Dendritic cell treated with granulocyte-macrophage colony-stimulating factor and Interleukin-4, amounts not matched to agents 40 ng/mL and 50 ng/mL, for 4 days (primary cell): ENCODE measurements at regions of chr1 and their contacts with region 1.

Region 1: DNA sequence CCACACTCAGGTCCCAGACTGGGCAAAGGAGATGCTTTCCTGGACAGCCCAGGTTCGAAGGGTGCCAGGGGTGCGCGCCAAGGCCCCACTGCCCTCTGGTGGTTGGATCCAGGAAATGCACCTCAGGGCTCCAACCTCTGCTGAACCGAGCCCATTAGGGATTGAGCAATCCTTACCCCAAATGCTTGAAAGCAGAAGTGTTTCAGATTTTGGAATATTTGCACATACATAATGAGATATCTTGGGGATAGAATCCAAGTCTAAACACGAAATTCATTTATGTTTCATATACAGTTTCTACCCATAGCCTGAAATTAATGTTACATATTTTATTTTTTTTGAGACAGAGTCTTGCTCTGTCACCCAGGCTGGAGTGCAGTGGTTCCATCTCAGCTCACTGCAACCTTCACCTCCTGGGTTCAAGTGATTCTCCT is 57.4 kb downstream of the SLC9A1 start:
- H3K4me3 Mint-ChIP-seq: no peak overlapping the region
- H3K27ac Mint-ChIP-seq: no peak overlapping the region
- H3K4me1 Mint-ChIP-seq: peaks cover 47% of the 10 kb centered on the region
- H3K27me3 Mint-ChIP-seq: peaks cover 2% of the 10 kb centered on the region

Region 2: GRCh38 chr1:25743149-25743825 is 1354.2 kb before region 1 on chr1:
- intact Hi-C with region 1: no loop called
- H3K4me3 Mint-ChIP-seq: no peak overlapping the region
- H3K27ac Mint-ChIP-seq: no peak overlapping the region
- H3K4me1 Mint-ChIP-seq: no peaks in the 10 kb centered on the region
- H3K27me3 Mint-ChIP-seq: no peaks in the 10 kb centered on the region

Region 3: GRCh38 chr1:26965213-26965612 is 132.3 kb before region 1 on chr1:
- intact Hi-C with region 1: loop called (anchors 5 kb)
- H3K4me3 Mint-ChIP-seq: no peak overlapping the region
- H3K27ac Mint-ChIP-seq: no peak overlapping the region
- H3K4me1 Mint-ChIP-seq: peaks cover 6% of the 10 kb centered on the region
- H3K27me3 Mint-ChIP-seq: peaks cover 56% of the 10 kb centered on the region

Region 4: DNA sequence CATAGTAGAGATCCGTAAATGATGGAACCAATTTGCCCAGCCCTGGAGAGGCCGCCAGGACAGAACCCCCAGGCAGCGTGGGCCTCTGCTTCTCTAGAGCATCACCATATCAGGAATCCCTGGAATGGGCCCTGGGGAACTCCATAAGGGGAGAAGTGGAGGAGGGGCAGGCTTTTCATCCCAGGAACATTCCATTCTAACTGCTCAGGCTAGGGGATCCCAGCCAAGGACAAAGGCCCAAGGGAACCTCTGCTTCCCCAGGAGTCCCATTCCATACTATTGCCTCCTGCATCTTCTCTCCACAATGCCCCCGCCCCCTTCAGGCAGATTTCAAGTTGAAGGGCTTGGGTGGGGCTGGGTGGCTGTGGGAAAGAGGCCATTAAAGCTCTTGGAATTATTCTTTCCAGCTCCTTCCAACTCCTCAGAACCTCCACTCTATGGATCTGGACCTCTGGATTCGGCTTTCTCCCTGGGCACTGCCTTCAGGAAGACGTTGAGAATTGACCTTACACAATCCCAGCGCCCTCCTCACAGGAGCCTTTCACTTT is 98.0 kb before region 1 on chr1:
- intact Hi-C with region 1: loop called (anchors 2 kb)
- H3K4me3 Mint-ChIP-seq: no peak overlapping the region
- H3K27ac Mint-ChIP-seq: no peak overlapping the region
- H3K4me1 Mint-ChIP-seq: peaks cover 40% of the 10 kb centered on the region
- H3K27me3 Mint-ChIP-seq: peaks cover 30% of the 10 kb centered on the region

Region 5: GRCh38 chr1:27044613-27045151 is 52.8 kb before region 1 on chr1:
- intact Hi-C with region 1: loop called (anchors 1 kb)
- H3K4me3 Mint-ChIP-seq: no peak overlapping the region
- H3K27ac Mint-ChIP-seq: no peak overlapping the region
- H3K4me1 Mint-ChIP-seq: peaks cover 11% of the 10 kb centered on the region
- H3K27me3 Mint-ChIP-seq: peaks cover 28% of the 10 kb centered on the region